ENCODE measurements at regions of chr18 and their contacts with region 1.

Region 1: DNA sequence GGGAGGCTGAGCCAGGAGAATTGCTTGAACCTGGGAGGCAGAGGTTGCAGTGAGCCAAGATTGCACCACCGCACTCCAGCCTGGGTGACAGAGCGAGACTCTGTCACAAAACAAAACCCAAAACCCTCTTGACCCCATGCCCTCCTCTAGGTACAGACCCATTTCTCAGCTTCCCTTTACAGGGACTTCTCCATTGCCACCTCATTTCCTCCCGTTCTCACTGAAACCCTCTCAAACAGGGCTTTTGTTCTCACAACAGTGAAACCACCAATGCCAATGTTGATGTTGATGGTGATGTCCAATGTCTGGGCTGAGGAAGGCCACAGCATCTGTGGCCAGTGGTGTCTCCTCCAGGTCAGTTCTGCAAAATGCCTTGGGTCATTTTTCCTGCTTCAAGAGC is 69.0 kb upstream of the ZCCHC2 start:
- DNase-seq: no peak
- ATAC-seq: peak; percentile 22
- H3K4me3 Mint-ChIP-seq: no peak overlapping the region
- H3K27ac Mint-ChIP-seq: peak overlapping the region; percentile 24
- H3K4me1 Mint-ChIP-seq: peaks cover 20% of the 10 kb centered on the region
- H3K27me3 Mint-ChIP-seq: peaks cover 9% of the 10 kb centered on the region

Region 2: GRCh38 chr18:62312851-62313250 is 141.0 kb before region 1 on chr18:
- CTCF ChIA-PET with region 1: no interaction called
- POLR2A ChIA-PET with region 1: no interaction called
- intact Hi-C with region 1: no loop called
- DNase-seq: no peak
- ATAC-seq: no peak
- H3K4me3 Mint-ChIP-seq: no peak overlapping the region
- H3K27ac Mint-ChIP-seq: no peak overlapping the region
- H3K4me1 Mint-ChIP-seq: no peaks in the 10 kb centered on the region
- H3K27me3 Mint-ChIP-seq: peaks cover 3% of the 10 kb centered on the region

Region 3: GRCh38 chr18:62372156-62372555 is 81.7 kb before region 1 on chr18:
- CTCF ChIA-PET with region 1: no interaction called
- POLR2A ChIA-PET with region 1: no interaction called
- intact Hi-C with region 1: no loop called
- DNase-seq: no peak
- ATAC-seq: no peak
- H3K4me3 Mint-ChIP-seq: no peak overlapping the region
- H3K27ac Mint-ChIP-seq: no peak overlapping the region
- H3K4me1 Mint-ChIP-seq: peaks cover 18% of the 10 kb centered on the region
- H3K27me3 Mint-ChIP-seq: peaks cover 3% of the 10 kb centered on the region

Region 4: GRCh38 chr18:62432176-62432818 is 21.6 kb before region 1 on chr18:
- CTCF ChIA-PET with region 1: interaction called, 4 read pairs
- POLR2A ChIA-PET with region 1: no interaction called
- intact Hi-C with region 1: loop called in 1 of 2 experiments (anchors 2 kb)
- DNase-seq: no peak
- ATAC-seq: no peak
- H3K4me3 Mint-ChIP-seq: no peak overlapping the region
- H3K27ac Mint-ChIP-seq: no peak overlapping the region
- H3K4me1 Mint-ChIP-seq: no peaks in the 10 kb centered on the region
- H3K27me3 Mint-ChIP-seq: peaks cover 4% of the 10 kb centered on the region

Measured in activated CD4-positive, alpha-beta T cell treated with anti-CD3 and anti-CD28 coated beads for 36 hours (primary cell).